Panc1 (cell line): ENCODE measurements at regions of chr5 and their contacts with region 1.

Region 1: GRCh38 chr5:166898166-166898565 is 1393.3 kb upstream of the WWC1 start:
- DNase-seq: no peak
- ATAC-seq: no peak
- H3K4me3 ChIP-seq: no peak overlapping the region
- H3K27ac ChIP-seq: no peak overlapping the region
- H3K4me1 ChIP-seq: no peaks in the 10 kb centered on the region
- H3K27me3 ChIP-seq: no peaks in the 10 kb centered on the region
- CTCF ChIP-seq: no peak

Region 2: GRCh38 chr5:168209244-168209995 is 1311.3 kb after region 1 on chr5:
- CTCF ChIA-PET with region 1: interaction called, 10 read pairs
- POLR2A ChIA-PET with region 1: no interaction called
- in situ Hi-C with region 1: no loop called
- intact Hi-C with region 1: no loop called
- DNase-seq: no peak
- ATAC-seq: no peak
- H3K4me3 ChIP-seq: no peak overlapping the region
- H3K27ac ChIP-seq: no peak overlapping the region
- H3K4me1 ChIP-seq: no peaks in the 10 kb centered on the region
- H3K27me3 ChIP-seq: no peaks in the 10 kb centered on the region
- CTCF ChIP-seq: no peak